Mammary epithelial cell (primary cell): ENCODE measurements at regions of chr5 and their contacts with region 1.

Region 1: GRCh38 chr5:59193616-59194319 is 610.9 kb downstream of the RAB3C start:
- DNase-seq: peak; percentile 100
- H3K4me3 ChIP-seq: no peak overlapping the region
- H3K27ac ChIP-seq: peak overlapping the region; percentile 97
- H3K4me1 ChIP-seq: peaks cover 15% of the 10 kb centered on the region
- H3K27me3 ChIP-seq: no peaks in the 10 kb centered on the region
- CTCF ChIP-seq: no peak

Region 2: DNA sequence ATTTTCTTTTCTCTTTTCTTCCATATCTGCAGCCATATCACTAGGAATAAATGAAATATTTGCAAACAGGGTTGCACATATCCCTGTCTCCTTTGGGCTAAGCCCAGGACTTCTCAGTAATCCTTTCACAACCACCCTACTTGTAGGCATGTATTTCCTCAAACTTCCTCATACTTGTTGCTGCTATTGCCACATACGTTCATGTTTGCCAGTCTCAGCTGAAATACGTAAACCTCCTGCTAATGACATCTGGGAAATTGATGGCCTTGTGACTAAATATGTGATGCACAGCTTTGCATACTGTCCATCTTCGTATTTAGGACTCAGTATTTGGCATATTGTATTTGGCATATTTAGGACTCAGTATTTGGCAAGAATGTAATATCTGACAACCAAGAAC is 958.5 kb before region 1 on chr5:
- CTCF ChIA-PET with region 1: no interaction called
- dilution Hi-C with region 1: no loop called
- in situ Hi-C with region 1: no loop called
- intact Hi-C with region 1: no loop called
- DNase-seq: peak; percentile 36
- H3K4me3 ChIP-seq: no peak overlapping the region
- H3K27ac ChIP-seq: no peak overlapping the region
- H3K4me1 ChIP-seq: peaks cover 12% of the 10 kb centered on the region
- H3K27me3 ChIP-seq: no peaks in the 10 kb centered on the region
- CTCF ChIP-seq: no peak

Region 3: DNA sequence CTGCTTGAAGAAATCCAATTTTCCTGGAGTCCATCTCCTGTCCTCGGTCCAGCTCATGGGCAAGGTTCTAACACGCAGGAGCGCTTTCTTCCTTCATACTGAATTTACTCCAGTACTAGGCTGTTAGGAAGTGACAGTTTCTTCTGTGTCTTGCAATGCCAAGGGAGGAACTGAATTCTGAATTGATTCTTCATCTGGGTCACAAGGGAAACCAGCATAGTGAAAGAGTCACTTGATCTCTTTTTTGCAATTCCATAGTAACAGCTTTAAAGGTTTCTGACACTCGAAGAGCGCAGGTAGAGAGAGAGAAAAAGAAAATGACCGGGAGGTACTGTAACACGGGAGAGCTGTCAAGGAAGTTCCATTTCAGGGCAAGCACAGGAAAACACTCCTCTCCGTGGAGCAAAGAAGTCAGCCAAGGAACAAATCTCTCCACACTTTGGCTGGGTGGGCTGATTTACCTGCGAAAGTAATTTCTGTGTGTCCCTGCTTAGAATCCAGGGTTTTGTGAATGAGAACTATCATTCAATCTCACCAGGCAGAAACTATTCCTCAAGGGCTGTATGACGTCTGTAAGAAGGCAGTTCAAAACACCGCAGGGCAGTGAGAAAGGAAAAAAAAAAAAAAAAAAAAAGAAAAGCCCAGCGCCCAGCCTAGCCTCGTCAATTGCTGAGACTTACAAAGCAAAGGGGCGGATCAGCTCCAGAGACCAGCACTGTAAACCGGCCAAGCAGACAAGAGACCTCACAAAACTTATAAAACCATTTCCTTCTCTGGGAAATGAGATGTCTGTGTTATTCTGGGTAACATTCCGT is 81.9 kb after region 1 on chr5:
- CTCF ChIA-PET with region 1: no interaction called
- dilution Hi-C with region 1: loop called (anchors 5 kb)
- in situ Hi-C with region 1: no loop called
- intact Hi-C with region 1: loop called (anchors 1 kb)
- DNase-seq: peak; percentile 85
- H3K4me3 ChIP-seq: peak overlapping the region; percentile 46 to 93 (median 80)
- H3K27ac ChIP-seq: peak overlapping the region; percentile 95
- H3K4me1 ChIP-seq: peaks cover 8% of the 10 kb centered on the region
- H3K27me3 ChIP-seq: no peaks in the 10 kb centered on the region
- CTCF ChIP-seq: no peak

Region 4: GRCh38 chr5:59348186-59348585 is 154.4 kb after region 1 on chr5:
- CTCF ChIA-PET with region 1: interaction called, 10 read pairs
- dilution Hi-C with region 1: no loop called
- in situ Hi-C with region 1: no loop called
- intact Hi-C with region 1: no loop called
- DNase-seq: peak; percentile 2
- H3K4me3 ChIP-seq: no peak overlapping the region
- H3K27ac ChIP-seq: no peak overlapping the region
- H3K4me1 ChIP-seq: no peaks in the 10 kb centered on the region
- H3K27me3 ChIP-seq: no peaks in the 10 kb centered on the region
- CTCF ChIP-seq: peak; percentile 13 to 46

Region 5: GRCh38 chr5:59496524-59497134 is 302.9 kb after region 1 on chr5:
- CTCF ChIA-PET with region 1: interaction called, 9 read pairs
- dilution Hi-C with region 1: no loop called
- in situ Hi-C with region 1: no loop called
- intact Hi-C with region 1: loop called (anchors 5 kb)
- DNase-seq: no peak
- H3K4me3 ChIP-seq: no peak overlapping the region
- H3K27ac ChIP-seq: no peak overlapping the region
- H3K4me1 ChIP-seq: no peaks in the 10 kb centered on the region
- H3K27me3 ChIP-seq: no peaks in the 10 kb centered on the region
- CTCF ChIP-seq: peak; percentile 62 to 70

Region 6: GRCh38 chr5:59790399-59791125 is 596.8 kb after region 1 on chr5:
- CTCF ChIA-PET with region 1: no interaction called
- dilution Hi-C with region 1: no loop called
- in situ Hi-C with region 1: loop called (anchors 25 kb)
- intact Hi-C with region 1: loop called (anchors 2 kb)
- DNase-seq: no peak
- H3K4me3 ChIP-seq: no peak overlapping the region
- H3K27ac ChIP-seq: no peak overlapping the region
- H3K4me1 ChIP-seq: peaks cover 46% of the 10 kb centered on the region
- H3K27me3 ChIP-seq: no peaks in the 10 kb centered on the region
- CTCF ChIP-seq: no peak